ENCODE measurements at regions of chr10 and their contacts with region 1.

Region 1: DNA sequence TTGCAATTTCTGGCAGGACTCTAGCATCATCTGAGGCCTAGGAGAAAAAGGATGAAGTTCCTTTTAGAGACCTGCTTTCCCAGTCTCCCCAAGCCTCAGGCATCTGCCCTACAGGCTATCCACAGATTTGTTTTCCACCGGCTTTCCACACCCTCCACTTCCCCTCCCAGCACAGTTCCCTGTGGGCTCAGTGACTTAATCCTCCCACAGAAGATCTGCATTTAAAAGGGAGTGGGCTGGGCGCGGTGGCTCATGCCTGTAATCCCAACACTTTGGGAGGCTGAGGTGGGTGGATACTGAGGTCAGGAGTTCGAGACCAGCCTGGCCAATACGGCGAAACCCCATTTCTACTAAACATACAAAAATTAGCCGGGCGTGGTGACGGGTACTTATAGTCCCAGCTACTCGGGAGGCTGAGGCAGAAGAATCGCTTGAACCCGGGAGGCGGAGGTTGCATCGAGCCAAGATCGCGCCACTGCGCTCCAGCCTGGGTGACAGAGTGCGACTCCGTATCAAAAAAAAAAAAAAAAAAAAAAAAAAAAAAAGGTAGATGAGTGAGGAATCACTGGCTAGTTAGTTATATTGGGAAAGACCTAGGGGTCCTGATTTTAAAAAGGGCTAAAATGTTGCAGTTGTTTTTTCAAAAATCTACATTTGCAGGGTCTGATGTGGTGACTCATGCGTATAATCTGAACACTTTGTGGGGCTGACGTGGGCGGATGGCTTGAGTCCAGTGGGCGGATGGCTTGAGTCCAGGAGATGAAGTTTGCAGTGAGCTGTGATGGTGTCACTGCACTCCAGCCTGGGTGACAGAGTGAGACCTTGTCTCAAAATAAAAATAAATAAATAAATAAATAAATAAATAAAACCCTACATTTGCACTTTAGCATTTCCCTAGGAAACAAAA is 119.5 kb downstream of the BAMBI start:
- DNase-seq: peak; percentile 84

Region 2: DNA sequence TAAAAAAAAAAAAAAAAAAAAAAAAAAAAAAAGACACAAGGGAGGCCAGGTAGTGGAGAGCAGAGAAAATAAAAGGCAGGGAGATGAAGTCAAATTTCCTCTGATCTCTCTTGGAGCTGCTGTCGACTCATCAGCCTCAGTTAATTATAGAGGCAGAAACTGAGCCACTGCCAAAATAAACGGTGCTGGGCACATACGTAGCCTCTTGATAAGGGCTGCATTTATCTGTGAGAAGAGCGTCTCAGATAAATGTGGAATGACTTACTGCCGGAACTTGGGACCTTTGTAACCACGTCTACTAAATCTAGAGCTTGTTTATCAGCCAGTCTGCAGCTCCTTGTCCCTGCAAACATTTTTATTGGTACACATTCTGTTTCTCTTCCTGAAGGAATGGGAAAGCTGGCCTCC is 42.7 kb after region 1 on chr10:
- intact Hi-C with region 1: loop called (anchors 5 kb)
- DNase-seq: no peak

Region 3: DNA sequence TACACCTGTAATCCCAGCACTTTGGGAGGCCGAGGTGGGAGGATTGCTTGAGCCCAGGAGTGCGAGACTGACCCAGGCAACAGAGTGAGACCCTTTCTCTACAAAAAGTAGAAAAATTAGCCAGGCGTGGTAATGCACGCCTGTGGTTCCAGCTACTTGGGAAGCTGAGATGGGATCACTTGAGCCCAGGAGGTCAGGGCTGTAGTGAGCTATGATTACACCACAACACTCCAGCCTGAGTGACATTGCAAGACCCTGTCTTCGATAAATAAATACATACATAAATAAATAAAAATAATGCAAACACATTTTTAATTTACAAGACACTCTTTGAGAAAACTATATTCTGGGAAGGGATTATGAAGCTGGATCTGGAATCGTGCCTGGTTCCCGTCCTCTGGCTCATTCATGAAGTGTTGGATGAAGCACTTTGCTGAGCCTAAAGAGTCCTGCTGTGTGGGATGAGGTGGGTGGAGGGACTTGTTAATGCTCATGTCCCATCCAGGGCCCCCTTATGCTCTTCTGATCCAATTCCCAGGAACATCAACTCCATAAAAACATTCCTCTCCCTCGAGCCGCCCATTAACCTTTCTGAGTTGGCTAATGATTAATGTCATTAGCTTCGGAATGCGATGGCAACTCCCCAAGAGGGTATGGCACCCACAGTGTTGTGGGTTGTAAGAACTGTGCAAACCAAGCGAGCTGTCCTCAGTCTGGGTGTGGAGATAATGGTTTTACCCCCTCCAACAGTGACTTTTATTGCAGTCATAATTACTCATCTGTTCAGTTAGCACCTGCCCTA is 116.8 kb after region 1 on chr10:
- intact Hi-C with region 1: no loop called
- DNase-seq: no peak

Region 4: DNA sequence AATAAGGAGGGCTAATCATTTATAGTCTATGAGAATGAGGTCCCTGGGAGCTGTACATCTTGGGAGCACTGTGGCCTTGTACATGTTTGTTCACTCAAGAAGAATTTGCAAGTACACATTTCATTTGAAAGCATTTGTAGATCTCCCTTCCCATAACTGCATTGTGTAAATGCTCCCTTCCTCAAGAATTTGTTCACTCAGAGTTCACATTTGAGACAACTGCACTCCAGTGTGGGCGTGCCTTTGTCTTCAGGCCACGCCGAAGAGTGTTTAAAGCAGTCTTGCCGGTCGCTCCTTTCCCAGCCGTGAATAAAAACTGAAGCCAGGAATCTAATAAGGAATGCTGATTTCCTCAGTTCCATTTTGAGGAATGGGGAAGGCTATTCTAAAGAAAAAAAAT is 200.9 kb after region 1 on chr10:
- intact Hi-C with region 1: no loop called
- DNase-seq: no peak

Region 5: GRCh38 chr10:29039677-29040189 is 242.9 kb after region 1 on chr10:
- intact Hi-C with region 1: no loop called
- DNase-seq: no peak